ENCODE measurements at regions of chr4 and their contacts with region 1.

Region 1: DNA sequence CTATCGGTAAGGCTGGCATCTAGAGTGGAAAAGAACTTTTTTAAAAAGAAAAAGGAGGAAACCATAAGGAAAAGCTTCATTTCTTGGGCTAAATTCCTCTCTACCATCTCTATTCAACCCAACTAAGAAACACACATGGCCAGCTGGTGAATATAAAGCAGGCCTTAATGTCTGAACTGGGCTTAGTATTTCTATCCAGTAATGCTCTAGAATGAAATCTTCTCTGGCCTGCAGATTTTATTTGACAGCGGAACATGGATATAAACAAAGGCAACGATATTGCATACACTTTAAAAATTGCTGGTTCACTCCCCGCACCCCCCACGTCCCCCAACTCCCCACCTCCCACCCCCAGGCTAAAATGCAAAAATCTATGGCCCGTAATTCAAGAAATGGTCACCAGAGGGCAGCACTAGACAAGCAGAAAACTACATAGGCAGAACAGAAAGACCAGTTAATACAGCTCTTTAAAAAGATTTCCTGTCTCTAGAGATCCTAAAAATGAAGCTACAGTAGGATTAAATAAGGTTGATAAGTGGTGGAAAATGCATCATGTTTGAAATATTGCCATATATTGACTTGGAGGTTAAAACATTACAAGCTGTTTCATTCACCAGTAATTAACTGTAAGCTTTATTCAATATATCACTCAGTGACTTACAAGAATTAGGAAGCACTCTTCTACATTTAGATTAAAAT is 155.2 kb upstream of the GALNT7 start:
- DNase-seq: peak; percentile 64 to 85 (median 78)
- H3K4me3 ChIP-seq: no peak overlapping the region
- H3K27ac ChIP-seq: no peak overlapping the region
- H3K4me1 ChIP-seq: peaks cover 0 to 10% (median 5%) of the 10 kb centered on the region in 4 experiments
- H3K27me3 ChIP-seq: no peaks in the 10 kb centered on the region

Region 2: DNA sequence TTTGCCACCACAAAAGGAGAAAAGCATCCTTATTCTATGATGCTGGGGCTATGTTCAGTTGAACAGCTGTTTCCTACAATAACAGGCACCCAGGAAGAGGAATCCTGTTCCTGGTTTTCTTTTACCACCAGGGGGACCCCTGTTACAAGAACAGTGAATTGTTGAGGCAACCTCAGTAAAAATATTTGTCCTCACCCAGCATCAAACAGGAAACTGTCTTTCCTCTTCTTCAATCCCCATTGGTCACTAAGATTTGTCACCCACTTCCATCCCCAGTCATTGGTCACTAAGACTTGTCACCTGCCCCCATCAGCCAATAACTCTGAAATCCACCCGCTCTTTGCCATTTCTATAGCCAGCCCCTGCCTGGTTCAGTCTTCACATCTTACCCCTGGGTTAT is 11.8 kb after region 1 on chr4:
- CTCF ChIA-PET with region 1: interaction called, 28 read pairs
- POLR2A ChIA-PET with region 1: interaction called, 8 read pairs
- DNase-seq: peak; percentile 47 to 75 (median 65)
- H3K4me3 ChIP-seq: no peak overlapping the region
- H3K27ac ChIP-seq: no peak overlapping the region
- H3K4me1 ChIP-seq: peaks cover 2 to 12% (median 11%) of the 10 kb centered on the region in 4 experiments
- H3K27me3 ChIP-seq: no peaks in the 10 kb centered on the region

Region 3: DNA sequence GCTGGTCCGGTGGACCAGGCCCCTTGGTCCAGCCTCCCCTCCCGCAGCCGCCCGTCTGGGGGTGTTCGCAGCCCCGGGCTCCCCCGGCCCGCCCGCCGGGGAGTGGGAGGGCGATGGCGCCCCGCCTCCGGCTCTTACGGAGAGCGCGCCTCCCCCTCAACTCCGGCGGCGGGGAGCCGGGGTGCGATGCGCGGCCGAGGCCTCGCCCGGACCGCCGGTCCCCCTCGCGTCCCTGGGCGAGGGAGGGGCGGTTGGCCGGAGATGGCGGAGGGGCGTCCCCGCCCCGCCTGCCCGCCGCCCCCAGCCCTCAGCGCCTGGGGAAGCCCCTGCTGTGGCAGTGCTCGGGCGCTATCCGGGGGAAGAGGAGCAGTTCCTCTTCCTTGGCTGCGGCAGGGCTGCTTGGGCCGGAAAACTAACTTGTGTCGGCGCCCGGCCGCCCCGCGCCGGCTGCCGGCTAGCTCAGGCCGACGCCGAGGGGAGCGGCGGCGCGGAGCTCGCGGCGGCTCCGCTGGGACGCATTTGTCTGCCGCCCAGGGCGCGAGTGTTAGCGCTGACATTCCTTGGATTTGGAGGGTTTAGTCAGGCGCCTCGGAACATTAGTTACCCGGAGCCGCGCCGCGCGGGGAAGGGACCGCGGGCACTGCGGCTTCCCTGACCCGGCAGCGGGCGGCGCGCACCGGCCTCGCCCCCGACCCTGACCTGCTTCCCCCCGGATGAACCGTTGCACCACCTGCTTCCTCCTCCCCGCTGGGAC is 156.2 kb after region 1 on chr4:
- CTCF ChIA-PET with region 1: interaction called, 11 read pairs
- POLR2A ChIA-PET with region 1: no interaction called
- DNase-seq: peak; percentile 83 to 95 (median 93)
- H3K4me3 ChIP-seq: peak overlapping the region; percentile 86 to 97 (median 90)
- H3K27ac ChIP-seq: peak overlapping the region; percentile 72 to 92
- H3K4me1 ChIP-seq: peaks cover 44 to 61% (median 53%) of the 10 kb centered on the region in 4 experiments
- H3K27me3 ChIP-seq: no peaks in the 10 kb centered on the region

Region 4: DNA sequence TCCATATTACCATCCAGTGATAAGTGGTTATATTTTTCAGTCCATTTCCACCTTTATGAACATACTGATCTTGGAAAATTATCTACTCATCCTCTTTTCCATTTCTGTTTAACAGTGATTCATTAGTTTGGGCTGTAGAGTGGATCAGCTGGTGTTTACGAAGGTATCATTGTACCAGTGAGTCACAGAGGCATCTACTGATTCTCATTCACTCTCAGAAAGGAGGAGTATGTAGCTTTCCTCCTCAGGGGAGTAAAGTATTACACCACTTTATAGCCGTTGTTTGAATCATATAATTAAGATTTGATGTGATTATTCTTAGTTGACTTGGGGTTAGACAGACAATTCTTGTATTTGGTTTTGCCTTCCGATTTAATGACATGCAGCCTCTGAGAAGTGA is 229.9 kb after region 1 on chr4:
- CTCF ChIA-PET with region 1: interaction called, 10 read pairs
- POLR2A ChIA-PET with region 1: no interaction called
- DNase-seq: no peak
- H3K4me3 ChIP-seq: no peak overlapping the region
- H3K27ac ChIP-seq: no peak overlapping the region
- H3K4me1 ChIP-seq: peaks cover 0 to 20% (median 4%) of the 10 kb centered on the region in 4 experiments
- H3K27me3 ChIP-seq: no peaks in the 10 kb centered on the region

Region 5: DNA sequence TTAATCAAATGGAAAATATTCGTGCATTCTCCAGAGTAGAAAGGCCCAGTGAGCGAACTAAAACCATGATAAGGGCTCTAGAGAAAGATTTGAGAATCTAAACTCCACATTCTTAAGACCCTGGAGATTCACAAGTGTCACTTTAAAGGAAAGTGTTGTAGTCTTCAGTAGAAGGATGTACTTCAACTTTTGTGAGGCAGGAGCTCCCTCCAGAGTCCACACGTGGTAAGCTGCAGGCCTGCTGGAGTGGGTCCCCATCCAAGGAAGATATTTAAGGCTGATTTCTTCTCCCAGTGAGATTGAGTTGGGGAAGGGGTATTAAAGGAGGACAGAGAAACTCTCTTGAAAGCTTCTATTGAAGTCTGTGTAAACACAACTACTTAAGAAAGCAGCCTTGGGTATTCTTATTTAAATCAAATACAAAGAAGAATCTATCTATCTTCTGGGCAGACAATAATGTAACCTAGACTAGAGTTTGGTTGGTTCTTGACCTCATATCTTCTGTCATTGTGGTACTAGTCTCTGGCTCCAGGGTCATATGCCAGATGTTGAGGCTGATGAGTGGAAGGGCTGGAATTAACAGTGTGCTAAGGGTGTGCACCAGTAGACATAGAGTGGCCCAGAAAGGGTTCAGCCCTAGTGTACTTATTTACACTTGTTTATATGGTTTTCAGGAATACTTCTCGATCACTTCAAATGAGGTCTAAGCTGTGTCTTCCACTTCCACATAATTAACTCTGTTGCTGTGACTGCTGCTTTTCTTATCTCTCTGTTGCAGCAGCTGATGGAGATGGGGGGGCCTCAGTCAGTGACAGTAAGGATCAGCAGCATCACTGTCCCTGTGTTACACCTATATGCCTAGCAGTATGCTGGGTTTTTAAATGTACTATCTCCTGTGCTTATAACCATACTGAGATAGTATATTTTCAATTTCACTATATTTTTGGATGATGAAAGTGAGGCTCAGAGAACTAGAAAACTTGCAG is 244.6 kb after region 1 on chr4:
- CTCF ChIA-PET with region 1: interaction called, 121 read pairs
- POLR2A ChIA-PET with region 1: interaction called, 7 read pairs
- DNase-seq: peak; percentile 68 to 82 (median 78)
- H3K4me3 ChIP-seq: no peak overlapping the region
- H3K27ac ChIP-seq: no peak overlapping the region
- H3K4me1 ChIP-seq: peaks cover 3 to 21% (median 15%) of the 10 kb centered on the region in 4 experiments
- H3K27me3 ChIP-seq: no peaks in the 10 kb centered on the region

Region 6: GRCh38 chr4:173288296-173288695 is 274.9 kb after region 1 on chr4:
- CTCF ChIA-PET with region 1: interaction called, 10 read pairs
- POLR2A ChIA-PET with region 1: no interaction called
- DNase-seq: peak; percentile 65 to 83 (median 81)
- H3K4me3 ChIP-seq: peak overlapping the region in 2 of 7 experiments; percentile 21 to 63
- H3K27ac ChIP-seq: peak overlapping the region; percentile 73 to 89
- H3K4me1 ChIP-seq: peaks cover 0 to 5% (median 0%) of the 10 kb centered on the region in 4 experiments
- H3K27me3 ChIP-seq: no peaks in the 10 kb centered on the region

Region 7: DNA sequence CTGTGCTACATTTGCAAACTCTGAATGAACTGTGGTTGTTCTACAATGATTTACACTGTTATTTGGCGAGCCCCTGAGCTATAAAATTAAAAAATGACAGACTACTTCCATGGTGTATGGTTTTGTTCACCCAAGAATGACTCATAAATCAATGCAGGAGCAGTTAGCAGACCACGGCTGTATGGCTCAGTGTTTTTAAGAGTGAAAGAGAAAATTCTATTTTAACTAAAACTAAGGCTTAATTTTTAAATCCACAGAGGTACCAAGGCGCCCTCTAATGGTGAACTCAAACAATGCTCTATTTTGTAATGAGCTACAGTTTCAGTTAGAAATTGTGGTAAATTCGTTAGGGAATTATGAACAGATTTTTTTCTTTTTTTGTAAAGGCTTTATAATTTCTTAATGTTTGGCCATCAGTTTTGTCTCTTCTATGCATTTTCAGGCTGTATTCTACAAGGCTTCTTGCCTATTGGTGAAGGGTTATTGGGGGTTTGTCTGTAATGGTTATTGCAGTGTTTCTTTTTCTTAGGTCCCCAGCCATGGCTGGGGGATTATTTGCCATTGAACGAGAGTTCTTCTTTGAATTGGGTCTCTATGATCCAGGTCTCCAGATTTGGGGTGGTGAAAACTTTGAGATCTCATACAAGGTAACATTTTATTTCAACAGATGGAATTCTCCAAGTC is 288.3 kb after region 1 on chr4:
- CTCF ChIA-PET with region 1: interaction called, 31 read pairs
- POLR2A ChIA-PET with region 1: no interaction called
- DNase-seq: peak; percentile 74 to 91 (median 87)
- H3K4me3 ChIP-seq: peak overlapping the region in 2 of 7 experiments; percentile 35 to 38
- H3K27ac ChIP-seq: peak overlapping the region in 1 of 2 experiments; percentile 27
- H3K4me1 ChIP-seq: peaks cover 0 to 16% (median 6%) of the 10 kb centered on the region in 4 experiments
- H3K27me3 ChIP-seq: no peaks in the 10 kb centered on the region